ENCODE measurements at regions of chrX and their contacts with region 1.

Region 1: GRCh38 chrX:99301990-99302389 is 1108.1 kb downstream of the PCDH19 start:
- DNase-seq: peak; percentile 5
- ATAC-seq: peak; percentile 45; the same call in 1 of the 3 replicates
- H3K4me3 ChIP-seq: no peak overlapping the region
- H3K27ac ChIP-seq: no peak overlapping the region
- H3K4me1 ChIP-seq: no peaks in the 10 kb centered on the region
- H3K27me3 ChIP-seq: no peaks in the 10 kb centered on the region
- CTCF ChIP-seq: peak; percentile 35; the same call in 1 of the 2 replicates
- EP300 ChIP-seq: no peak
- POLR2A ChIP-seq: no peak
- RAD21 ChIP-seq: no peak

Region 2: GRCh38 chrX:99394456-99394855 is 92.5 kb after region 1 on chrX:
- CTCF ChIA-PET with region 1: no interaction called
- POLR2A ChIA-PET with region 1: no interaction called
- in situ Hi-C with region 1: no loop called
- intact Hi-C with region 1: loop called (anchors 1 kb)
- DNase-seq: peak; percentile 5
- ATAC-seq: peak; percentile 38; the same call in 1 of the 3 replicates
- H3K4me3 ChIP-seq: no peak overlapping the region
- H3K27ac ChIP-seq: no peak overlapping the region
- H3K4me1 ChIP-seq: no peaks in the 10 kb centered on the region
- H3K27me3 ChIP-seq: no peaks in the 10 kb centered on the region
- CTCF ChIP-seq: no peak
- EP300 ChIP-seq: no peak
- POLR2A ChIP-seq: no peak
- RAD21 ChIP-seq: no peak

Region 3: GRCh38 chrX:100413229-100413628 is 1111.2 kb after region 1 on chrX:
- CTCF ChIA-PET with region 1: no interaction called
- POLR2A ChIA-PET with region 1: no interaction called
- in situ Hi-C with region 1: no loop called
- intact Hi-C with region 1: loop called (anchors 5 kb)
- DNase-seq: peak; percentile 33
- ATAC-seq: peak; percentile 74
- H3K4me3 ChIP-seq: no peak overlapping the region
- H3K27ac ChIP-seq: no peak overlapping the region
- H3K4me1 ChIP-seq: no peaks in the 10 kb centered on the region
- H3K27me3 ChIP-seq: no peaks in the 10 kb centered on the region
- CTCF ChIP-seq: peak; percentile 53
- EP300 ChIP-seq: no peak
- POLR2A ChIP-seq: no peak
- RAD21 ChIP-seq: no peak